ENCODE measurements at regions of chr22 and their contacts with region 1.

Region 1: GRCh38 chr22:26658671-26659478 is 1.5 kb downstream of the MIAT start:
- DNase-seq: peak; percentile 78
- H3K4me3 Mint-ChIP-seq: peak overlapping the region; percentile 95
- H3K27ac Mint-ChIP-seq: peak overlapping the region; percentile 89
- H3K4me1 Mint-ChIP-seq: peaks cover 46% of the 10 kb centered on the region
- H3K27me3 Mint-ChIP-seq: peaks cover 9% of the 10 kb centered on the region

Region 2: GRCh38 chr22:26483439-26484359 is 175.2 kb before region 1 on chr22 and contains the starts of genes HPS4 and SRRD:
- intact Hi-C with region 1: loop called (anchors 1 kb)
- DNase-seq: peak; percentile 93
- H3K4me3 Mint-ChIP-seq: peak within 1 kb of the TSS; percentile 95
- H3K27ac Mint-ChIP-seq: peak within 1 kb of the TSS; percentile 94
- H3K4me1 Mint-ChIP-seq: peaks cover 70% of the 10 kb centered on the region
- H3K27me3 Mint-ChIP-seq: no peaks in the 10 kb centered on the region
- total RNA-seq, gene HPS4: 43.8 and 44.5 TPM in 2 replicates
- total RNA-seq, gene SRRD: 29.2 and 34.8 TPM in 2 replicates

Region 3: GRCh38 chr22:26700886-26701285 is 42.0 kb after region 1 on chr22:
- intact Hi-C with region 1: no loop called
- DNase-seq: no peak
- H3K4me3 Mint-ChIP-seq: no peak overlapping the region
- H3K27ac Mint-ChIP-seq: no peak overlapping the region
- H3K4me1 Mint-ChIP-seq: no peaks in the 10 kb centered on the region
- H3K27me3 Mint-ChIP-seq: no peaks in the 10 kb centered on the region